ENCODE measurements at regions of chr1 and their contacts with region 1.

Region 1: GRCh38 chr1:39973503-39974135 is 18.7 kb downstream of the MFSD2A start:
- DNase-seq: peak; percentile 57
- H3K4me3 ChIP-seq: no peak overlapping the region
- H3K27ac ChIP-seq: no peak overlapping the region
- H3K4me1 ChIP-seq: peaks cover 30% of the 10 kb centered on the region
- H3K27me3 ChIP-seq: no peaks in the 10 kb centered on the region
- CTCF ChIP-seq: peak; percentile 97 to 98

Region 2: DNA sequence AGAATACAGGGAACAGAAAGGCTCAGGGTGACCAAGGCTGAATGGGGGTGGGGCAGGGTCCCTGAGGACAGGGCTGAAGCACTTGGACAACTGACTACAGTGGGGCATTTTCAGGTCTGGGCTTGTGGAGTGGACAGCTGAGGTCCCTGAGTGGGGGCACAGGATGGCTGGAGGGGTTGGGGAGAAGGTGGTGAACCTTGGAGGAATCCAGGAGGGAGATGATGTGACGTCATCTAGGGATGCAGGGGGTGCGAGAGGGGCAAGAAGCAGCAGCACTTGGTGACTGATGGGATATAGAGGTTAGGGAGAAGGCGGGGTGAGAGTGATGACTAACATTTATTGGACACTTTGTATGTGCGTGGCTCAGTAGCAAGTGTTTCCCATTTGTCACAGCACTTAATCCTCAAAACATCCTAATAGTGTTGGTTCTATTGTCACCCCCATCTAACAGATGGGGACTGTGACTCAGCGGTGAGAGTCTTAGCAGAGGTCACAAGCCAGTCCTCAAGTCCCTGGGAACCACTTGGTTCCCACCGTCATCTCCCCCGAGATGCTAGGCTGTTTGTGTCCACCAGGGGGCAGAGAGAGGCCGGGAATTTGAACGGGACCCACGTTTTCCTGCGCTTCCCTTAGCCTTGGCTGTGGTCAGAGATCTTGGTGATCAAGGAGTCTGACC is 157.1 kb before region 1 on chr1:
- CTCF ChIA-PET with region 1: no interaction called
- dilution Hi-C with region 1: no loop called
- in situ Hi-C with region 1: loop called in 1 of 2 experiments (anchors 10 kb)
- intact Hi-C with region 1: loop called (anchors 1 kb)
- DNase-seq: peak; percentile 60
- H3K4me3 ChIP-seq: no peak overlapping the region
- H3K27ac ChIP-seq: no peak overlapping the region
- H3K4me1 ChIP-seq: no peaks in the 10 kb centered on the region
- H3K27me3 ChIP-seq: no peaks in the 10 kb centered on the region
- CTCF ChIP-seq: peak; percentile 75 to 85

Region 3: GRCh38 chr1:39835935-39836594 is 137.6 kb before region 1 on chr1:
- CTCF ChIA-PET with region 1: no interaction called
- dilution Hi-C with region 1: loop called (anchors 5 kb)
- in situ Hi-C with region 1: no loop called
- intact Hi-C with region 1: no loop called
- DNase-seq: no peak
- H3K4me3 ChIP-seq: no peak overlapping the region
- H3K27ac ChIP-seq: no peak overlapping the region
- H3K4me1 ChIP-seq: no peaks in the 10 kb centered on the region
- H3K27me3 ChIP-seq: no peaks in the 10 kb centered on the region
- CTCF ChIP-seq: no peak

Region 4: DNA sequence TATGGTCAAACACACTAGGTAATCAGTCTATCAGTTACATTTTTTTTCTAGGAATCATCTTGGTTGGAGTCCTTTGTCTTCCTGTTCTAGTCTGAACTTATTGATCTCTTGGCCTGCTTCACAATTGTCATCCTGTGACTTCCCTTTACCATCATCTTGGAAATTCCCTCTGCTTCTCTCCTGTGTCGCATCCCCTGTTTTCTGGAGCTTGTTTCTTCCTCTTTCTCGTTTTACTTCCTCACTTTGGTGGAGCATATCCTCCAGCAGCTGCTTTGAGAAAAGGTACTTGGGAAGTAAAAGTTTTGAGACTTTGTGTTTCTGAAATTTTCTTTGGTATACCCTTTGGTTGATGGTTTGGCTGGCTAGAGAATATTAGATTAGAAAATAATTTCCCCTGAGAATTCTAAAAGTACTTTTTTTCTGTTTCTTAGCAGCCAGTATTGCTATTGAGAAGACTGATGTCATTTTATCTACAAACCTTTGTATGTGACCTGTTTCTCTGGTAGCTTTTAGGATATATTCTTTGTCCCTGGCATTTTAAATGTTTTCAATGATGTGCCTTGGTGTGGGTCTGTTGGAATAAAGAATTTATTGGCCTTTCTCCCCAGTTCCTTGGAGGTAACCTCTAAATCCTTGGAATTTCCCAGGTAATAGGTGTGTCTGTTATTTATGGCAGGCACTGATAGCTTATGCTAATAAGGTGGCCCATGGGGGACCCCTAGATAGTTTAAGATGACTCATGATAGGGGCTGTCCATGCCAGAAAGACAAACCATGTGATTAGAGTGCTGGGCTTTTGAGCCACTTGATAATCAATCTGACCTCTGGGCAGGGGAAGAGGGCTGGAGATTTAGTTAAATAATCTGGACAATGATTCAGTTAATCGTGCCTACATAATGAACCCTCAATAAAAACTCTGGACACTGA is 65.8 kb before region 1 on chr1:
- CTCF ChIA-PET with region 1: no interaction called
- dilution Hi-C with region 1: no loop called
- in situ Hi-C with region 1: no loop called
- intact Hi-C with region 1: no loop called
- DNase-seq: no peak
- H3K4me3 ChIP-seq: no peak overlapping the region
- H3K27ac ChIP-seq: no peak overlapping the region
- H3K4me1 ChIP-seq: no peaks in the 10 kb centered on the region
- H3K27me3 ChIP-seq: no peaks in the 10 kb centered on the region
- CTCF ChIP-seq: no peak

Region 5: GRCh38 chr1:39919545-39919944 is 54.1 kb before region 1 on chr1:
- CTCF ChIA-PET with region 1: interaction called, 7 read pairs
- dilution Hi-C with region 1: no loop called
- in situ Hi-C with region 1: loop called (anchors 5 kb)
- intact Hi-C with region 1: loop called (anchors 1 kb)
- DNase-seq: peak; percentile 76
- H3K4me3 ChIP-seq: no peak overlapping the region
- H3K27ac ChIP-seq: no peak overlapping the region
- H3K4me1 ChIP-seq: no peaks in the 10 kb centered on the region
- H3K27me3 ChIP-seq: no peaks in the 10 kb centered on the region
- CTCF ChIP-seq: peak; percentile 71 to 84

Region 6: GRCh38 chr1:40014812-40015594 is 41.4 kb after region 1 on chr1:
- CTCF ChIA-PET with region 1: no interaction called
- dilution Hi-C with region 1: no loop called
- in situ Hi-C with region 1: no loop called
- intact Hi-C with region 1: loop called (anchors 2 kb)
- DNase-seq: peak; percentile 95
- H3K4me3 ChIP-seq: peak overlapping the region in 1 of 3 experiments; percentile 23
- H3K27ac ChIP-seq: peak overlapping the region; percentile 77
- H3K4me1 ChIP-seq: peaks cover 24% of the 10 kb centered on the region
- H3K27me3 ChIP-seq: no peaks in the 10 kb centered on the region
- CTCF ChIP-seq: no peak

Region 7: GRCh38 chr1:40040511-40041465 is 67.2 kb after region 1 on chr1 and contains the start of gene CAP1:
- CTCF ChIA-PET with region 1: no interaction called
- dilution Hi-C with region 1: loop called (anchors 5 kb)
- in situ Hi-C with region 1: loop called in 1 of 2 experiments (anchors 5 kb)
- intact Hi-C with region 1: loop called (anchors 2 kb)
- DNase-seq: peak; percentile 99
- H3K4me3 ChIP-seq: peak within 1 kb of the TSS; percentile 93 to 98 (median 98)
- H3K27ac ChIP-seq: peak within 1 kb of the TSS; percentile 85
- H3K4me1 ChIP-seq: peaks cover 46% of the 10 kb centered on the region
- H3K27me3 ChIP-seq: no peaks in the 10 kb centered on the region
- CTCF ChIP-seq: no peak
- total RNA-seq, gene CAP1: 715 to 877 TPM